Mammary epithelial cell (primary cell): ENCODE measurements at regions of chr17 and their contacts with region 1.

Region 1: DNA sequence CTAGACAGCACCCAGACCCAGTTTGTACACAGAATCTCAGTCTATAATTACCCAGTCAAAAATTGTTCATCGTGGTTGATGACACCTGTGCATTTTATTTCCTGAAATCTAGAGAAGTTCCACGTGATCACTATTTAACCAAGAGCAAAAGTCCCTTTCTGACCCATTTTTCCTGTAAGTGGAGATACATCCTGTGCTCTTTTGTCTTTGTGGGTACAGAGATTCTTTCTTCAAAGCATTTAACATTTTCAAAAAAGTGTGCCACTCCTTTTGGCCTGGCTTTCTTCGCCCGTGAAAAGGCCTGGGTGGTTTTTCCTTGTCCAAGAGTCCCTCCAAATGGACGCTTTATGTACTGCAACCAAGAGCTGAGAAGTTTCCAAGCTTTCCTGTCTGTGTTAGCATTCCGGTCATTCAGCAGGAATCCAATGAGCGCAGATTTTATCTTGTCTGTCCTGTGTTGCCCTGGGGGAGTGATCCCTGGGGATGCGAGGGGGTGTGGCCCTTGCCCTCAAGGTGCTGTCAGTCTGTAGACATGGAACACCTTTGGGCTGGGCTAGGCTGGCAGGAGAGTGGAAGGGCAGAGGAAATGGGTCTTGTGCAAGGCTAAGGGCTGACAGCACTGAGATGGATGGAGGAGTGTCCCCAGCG is 161.1 kb upstream of the CACNG5 start:
- DNase-seq: peak; percentile 69
- H3K4me3 ChIP-seq: no peak overlapping the region
- H3K27ac ChIP-seq: no peak overlapping the region
- H3K4me1 ChIP-seq: peaks cover 53% of the 10 kb centered on the region
- H3K27me3 ChIP-seq: no peaks in the 10 kb centered on the region
- CTCF ChIP-seq: peak; percentile 81 to 94

Region 2: GRCh38 chr17:66255112-66255511 is 418.7 kb before region 1 on chr17:
- CTCF ChIA-PET with region 1: no interaction called
- dilution Hi-C with region 1: no loop called
- in situ Hi-C with region 1: loop called (anchors 5 to 25 kb)
- intact Hi-C with region 1: loop called (anchors 1 kb)
- DNase-seq: peak; percentile 69
- H3K4me3 ChIP-seq: no peak overlapping the region
- H3K27ac ChIP-seq: no peak overlapping the region
- H3K4me1 ChIP-seq: no peaks in the 10 kb centered on the region
- H3K27me3 ChIP-seq: no peaks in the 10 kb centered on the region
- CTCF ChIP-seq: peak; percentile 68 to 75

Region 3: GRCh38 chr17:66420961-66421371 is 252.8 kb before region 1 on chr17:
- CTCF ChIA-PET with region 1: no interaction called
- dilution Hi-C with region 1: no loop called
- in situ Hi-C with region 1: no loop called
- intact Hi-C with region 1: loop called (anchors 5 kb)
- DNase-seq: peak; percentile 52
- H3K4me3 ChIP-seq: no peak overlapping the region
- H3K27ac ChIP-seq: no peak overlapping the region
- H3K4me1 ChIP-seq: peaks cover 22% of the 10 kb centered on the region
- H3K27me3 ChIP-seq: no peaks in the 10 kb centered on the region
- CTCF ChIP-seq: no peak

Region 4: GRCh38 chr17:66541461-66542128 is 132.2 kb before region 1 on chr17:
- CTCF ChIA-PET with region 1: no interaction called
- dilution Hi-C with region 1: no loop called
- in situ Hi-C with region 1: no loop called
- intact Hi-C with region 1: no loop called
- DNase-seq: peak; percentile 74
- H3K4me3 ChIP-seq: no peak overlapping the region
- H3K27ac ChIP-seq: peak overlapping the region; percentile 66
- H3K4me1 ChIP-seq: peaks cover 47% of the 10 kb centered on the region
- H3K27me3 ChIP-seq: no peaks in the 10 kb centered on the region
- CTCF ChIP-seq: no peak

Region 5: GRCh38 chr17:66567234-66568170 is 106.3 kb before region 1 on chr17:
- CTCF ChIA-PET with region 1: no interaction called
- dilution Hi-C with region 1: no loop called
- in situ Hi-C with region 1: loop called (anchors 5 to 25 kb)
- intact Hi-C with region 1: loop called (anchors 1 kb)
- DNase-seq: peak; percentile 68
- H3K4me3 ChIP-seq: no peak overlapping the region
- H3K27ac ChIP-seq: peak overlapping the region; percentile 5
- H3K4me1 ChIP-seq: peaks cover 13% of the 10 kb centered on the region
- H3K27me3 ChIP-seq: no peaks in the 10 kb centered on the region
- CTCF ChIP-seq: peak; percentile 92 to 97

Region 6: DNA sequence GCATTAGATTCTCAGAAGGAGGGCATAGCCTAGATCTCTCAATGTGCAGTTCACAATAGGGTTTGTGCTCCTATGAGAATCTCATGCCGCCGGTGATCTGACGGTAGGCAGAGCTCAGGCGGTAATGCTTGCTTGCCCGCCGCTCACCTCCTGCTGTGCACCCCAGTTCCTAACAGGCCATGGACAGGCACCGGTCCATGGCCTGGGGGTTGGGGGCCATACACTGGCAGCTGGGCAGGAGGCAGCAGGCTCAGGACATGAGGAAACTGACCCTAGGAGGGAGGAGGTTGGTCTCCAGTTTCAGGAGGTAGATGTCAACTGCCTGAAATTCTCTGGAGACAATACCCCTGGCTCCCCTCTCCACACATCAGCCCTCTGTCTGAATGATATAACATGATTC is 83.9 kb before region 1 on chr17:
- CTCF ChIA-PET with region 1: no interaction called
- dilution Hi-C with region 1: no loop called
- in situ Hi-C with region 1: no loop called
- intact Hi-C with region 1: no loop called
- DNase-seq: no peak
- H3K4me3 ChIP-seq: no peak overlapping the region
- H3K27ac ChIP-seq: no peak overlapping the region
- H3K4me1 ChIP-seq: no peaks in the 10 kb centered on the region
- H3K27me3 ChIP-seq: no peaks in the 10 kb centered on the region
- CTCF ChIP-seq: no peak

Region 7: DNA sequence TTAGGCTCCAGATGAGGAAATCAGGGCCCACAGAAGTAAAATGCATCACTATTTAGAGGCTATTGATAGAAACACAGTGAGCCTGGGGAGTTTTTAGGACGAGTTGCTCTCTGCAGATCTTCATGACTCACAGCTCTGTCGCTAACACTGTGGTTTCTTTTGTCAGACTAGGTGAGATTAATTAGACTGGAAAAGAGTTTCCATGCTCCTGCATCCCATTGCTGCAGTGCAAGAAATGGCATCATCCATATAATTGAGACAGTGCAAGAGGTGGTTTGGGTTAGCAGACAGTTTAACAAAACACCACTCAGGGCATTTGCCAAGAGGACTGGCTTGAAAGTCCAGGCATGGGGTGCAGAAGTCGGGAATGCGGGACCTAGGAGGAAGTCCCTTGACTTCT is 37.7 kb before region 1 on chr17:
- CTCF ChIA-PET with region 1: no interaction called
- dilution Hi-C with region 1: no loop called
- in situ Hi-C with region 1: no loop called
- intact Hi-C with region 1: loop called (anchors 2 kb)
- DNase-seq: peak; percentile 80
- H3K4me3 ChIP-seq: no peak overlapping the region
- H3K27ac ChIP-seq: no peak overlapping the region
- H3K4me1 ChIP-seq: peaks cover 25% of the 10 kb centered on the region
- H3K27me3 ChIP-seq: no peaks in the 10 kb centered on the region
- CTCF ChIP-seq: no peak

Region 8: DNA sequence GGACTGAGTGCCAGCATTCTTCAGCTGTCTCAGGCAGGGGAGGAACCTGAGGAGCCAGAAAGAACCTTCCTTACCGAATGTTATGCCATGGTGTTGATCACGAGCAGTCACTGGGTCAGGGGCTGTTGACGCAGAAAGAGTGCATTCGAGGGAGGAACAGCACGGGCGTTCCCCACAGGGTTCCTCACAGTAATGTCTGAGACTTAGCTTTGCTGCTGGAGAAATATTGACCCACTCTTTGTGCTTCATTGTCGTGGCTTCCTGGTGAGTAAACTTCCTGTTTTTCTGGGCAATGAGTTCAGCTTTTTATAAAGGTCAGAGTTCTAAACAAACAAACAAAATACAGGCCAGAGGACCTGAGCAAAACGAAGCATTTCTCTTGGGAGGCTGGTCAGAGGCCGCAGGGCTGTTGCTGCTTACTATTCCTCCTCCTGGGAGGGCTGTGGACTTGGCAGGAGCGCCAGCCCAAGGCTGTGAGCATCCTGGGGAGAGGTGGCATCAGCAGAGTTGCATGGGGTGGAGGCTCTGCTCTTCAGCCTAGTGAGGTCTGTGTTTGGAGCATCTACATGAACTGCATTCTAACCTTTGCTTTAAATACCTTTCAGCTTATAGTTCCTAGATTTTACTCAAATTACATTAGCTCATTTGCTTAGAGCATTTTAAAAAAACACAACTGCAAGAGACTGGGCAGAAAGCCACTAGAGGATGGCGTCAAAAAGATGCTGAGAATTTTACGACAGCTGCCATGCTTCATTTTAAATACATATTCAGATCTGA is 18.0 kb after region 1 on chr17:
- CTCF ChIA-PET with region 1: no interaction called
- dilution Hi-C with region 1: no loop called
- in situ Hi-C with region 1: no loop called
- intact Hi-C with region 1: no loop called
- DNase-seq: no peak
- H3K4me3 ChIP-seq: no peak overlapping the region
- H3K27ac ChIP-seq: no peak overlapping the region
- H3K4me1 ChIP-seq: no peaks in the 10 kb centered on the region
- H3K27me3 ChIP-seq: no peaks in the 10 kb centered on the region
- CTCF ChIP-seq: no peak

Region 9: GRCh38 chr17:66715745-66716156 is 42.0 kb after region 1 on chr17:
- CTCF ChIA-PET with region 1: no interaction called
- dilution Hi-C with region 1: no loop called
- in situ Hi-C with region 1: no loop called
- intact Hi-C with region 1: no loop called
- DNase-seq: peak; percentile 61
- H3K4me3 ChIP-seq: no peak overlapping the region
- H3K27ac ChIP-seq: no peak overlapping the region
- H3K4me1 ChIP-seq: peaks cover 17% of the 10 kb centered on the region
- H3K27me3 ChIP-seq: no peaks in the 10 kb centered on the region
- CTCF ChIP-seq: peak; percentile 58 to 77